Caco-2 (cell line): ENCODE measurements at regions of chr10 and their contacts with region 1.

Region 1: GRCh38 chr10:95430231-95430951 is 130.8 kb downstream of the SORBS1 start:
- DNase-seq: peak; percentile 69 to 76
- H3K4me3 ChIP-seq: no peak overlapping the region
- H3K4me3 Mint-ChIP-seq: no peak overlapping the region
- H3K27ac Mint-ChIP-seq: no peak overlapping the region
- H3K4me1 ChIP-seq: peaks cover 15% of the 10 kb centered on the region
- H3K4me1 Mint-ChIP-seq: no peaks in the 10 kb centered on the region
- H3K27me3 ChIP-seq: no peaks in the 10 kb centered on the region
- H3K27me3 Mint-ChIP-seq: no peaks in the 10 kb centered on the region
- CTCF ChIP-seq: peak; percentile 97 to 98

Region 2: GRCh38 chr10:95229724-95230627 is 200.4 kb before region 1 on chr10:
- CTCF ChIA-PET with region 1: no interaction called
- POLR2A ChIA-PET with region 1: no interaction called
- intact Hi-C with region 1: no loop called
- DNase-seq: no peak
- H3K4me3 ChIP-seq: no peak overlapping the region
- H3K4me3 Mint-ChIP-seq: no peak overlapping the region
- H3K27ac Mint-ChIP-seq: peak overlapping the region; percentile 24
- H3K4me1 ChIP-seq: peaks cover 5% of the 10 kb centered on the region
- H3K4me1 Mint-ChIP-seq: peaks cover 11% of the 10 kb centered on the region
- H3K27me3 ChIP-seq: no peaks in the 10 kb centered on the region
- H3K27me3 Mint-ChIP-seq: no peaks in the 10 kb centered on the region
- CTCF ChIP-seq: no peak

Region 3: GRCh38 chr10:95374597-95375209 is 55.7 kb before region 1 on chr10:
- CTCF ChIA-PET with region 1: interaction called, 6 read pairs
- POLR2A ChIA-PET with region 1: no interaction called
- intact Hi-C with region 1: loop called (anchors 1 kb)
- DNase-seq: peak; percentile 79 to 85
- H3K4me3 ChIP-seq: no peak overlapping the region
- H3K4me3 Mint-ChIP-seq: no peak overlapping the region
- H3K27ac Mint-ChIP-seq: no peak overlapping the region
- H3K4me1 ChIP-seq: no peaks in the 10 kb centered on the region
- H3K4me1 Mint-ChIP-seq: no peaks in the 10 kb centered on the region
- H3K27me3 ChIP-seq: no peaks in the 10 kb centered on the region
- H3K27me3 Mint-ChIP-seq: no peaks in the 10 kb centered on the region
- CTCF ChIP-seq: peak; percentile 94 to 95

Region 4: GRCh38 chr10:95467162-95467599 is 36.8 kb after region 1 on chr10:
- CTCF ChIA-PET with region 1: interaction called, 13 read pairs
- POLR2A ChIA-PET with region 1: no interaction called
- intact Hi-C with region 1: no loop called
- DNase-seq: peak; percentile 92 to 95
- H3K4me3 ChIP-seq: no peak overlapping the region
- H3K4me3 Mint-ChIP-seq: peak overlapping the region; percentile 18
- H3K27ac Mint-ChIP-seq: peak overlapping the region; percentile 46
- H3K4me1 ChIP-seq: peaks cover 46% of the 10 kb centered on the region
- H3K4me1 Mint-ChIP-seq: peaks cover 40% of the 10 kb centered on the region
- H3K27me3 ChIP-seq: no peaks in the 10 kb centered on the region
- H3K27me3 Mint-ChIP-seq: no peaks in the 10 kb centered on the region
- CTCF ChIP-seq: peak in 1 of 2 experiments; percentile 66

Region 5: GRCh38 chr10:95513941-95514392 is 83.6 kb after region 1 on chr10:
- CTCF ChIA-PET with region 1: no interaction called
- POLR2A ChIA-PET with region 1: no interaction called
- intact Hi-C with region 1: no loop called
- DNase-seq: no peak
- H3K4me3 ChIP-seq: no peak overlapping the region
- H3K4me3 Mint-ChIP-seq: no peak overlapping the region
- H3K27ac Mint-ChIP-seq: no peak overlapping the region
- H3K4me1 ChIP-seq: peaks cover 51% of the 10 kb centered on the region
- H3K4me1 Mint-ChIP-seq: peaks cover 44% of the 10 kb centered on the region
- H3K27me3 ChIP-seq: no peaks in the 10 kb centered on the region
- H3K27me3 Mint-ChIP-seq: no peaks in the 10 kb centered on the region
- CTCF ChIP-seq: no peak

Region 6: DNA sequence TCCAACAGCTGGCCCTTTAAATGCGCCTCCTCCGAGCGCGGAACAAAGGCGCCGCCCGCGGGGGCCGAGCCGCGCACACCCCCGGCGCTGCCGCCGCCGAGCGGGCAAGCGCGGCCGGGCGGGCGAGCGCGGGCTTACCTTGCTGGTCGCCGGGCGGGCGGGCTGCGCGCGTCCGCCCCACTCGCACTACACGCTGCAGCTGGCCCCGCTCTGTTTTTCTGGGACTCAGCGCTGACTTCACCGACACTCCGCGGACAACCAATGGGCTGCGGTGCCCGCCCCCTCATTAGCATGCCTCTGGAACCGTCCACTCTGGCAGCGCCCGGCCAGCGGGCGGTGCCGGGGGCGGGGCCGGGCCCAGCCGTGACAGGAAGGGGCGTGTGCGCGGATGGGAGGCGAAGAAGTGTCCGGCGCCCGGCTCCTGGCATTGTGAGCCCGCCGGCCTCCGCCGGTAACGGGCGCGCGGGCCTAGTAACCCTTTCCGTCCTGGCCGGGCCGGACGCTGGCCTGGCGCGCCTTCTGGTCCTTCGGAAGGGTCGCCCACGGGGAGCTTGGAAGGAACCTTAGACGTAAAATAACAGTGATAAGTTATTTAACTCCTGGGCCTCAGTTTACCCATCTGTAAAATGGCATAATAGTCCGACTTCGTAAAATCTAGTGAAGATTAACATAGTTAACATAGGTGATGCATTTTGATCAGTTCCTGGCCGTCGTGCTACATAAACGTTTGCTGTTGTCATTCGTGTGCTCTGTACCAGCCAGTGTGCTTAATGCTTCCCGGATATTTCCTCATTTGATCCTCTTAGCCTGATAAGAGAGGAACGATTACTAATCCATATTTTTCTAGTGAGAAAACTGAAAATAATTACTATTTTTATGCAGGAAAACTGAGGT is 131.0 kb after region 1 on chr10 and contains the start of gene SORBS1:
- CTCF ChIA-PET with region 1: interaction called, 10 read pairs
- POLR2A ChIA-PET with region 1: no interaction called
- intact Hi-C with region 1: loop called (anchors 2 kb)
- DNase-seq: peak; percentile 98
- H3K4me3 ChIP-seq: peak within 1 kb of the TSS; percentile 89
- H3K4me3 Mint-ChIP-seq: peak within 1 kb of the TSS; percentile 99
- H3K27ac Mint-ChIP-seq: peak within 1 kb of the TSS; percentile 83
- H3K4me1 ChIP-seq: peaks cover 50% of the 10 kb centered on the region
- H3K4me1 Mint-ChIP-seq: peaks cover 59% of the 10 kb centered on the region
- H3K27me3 ChIP-seq: no peaks in the 10 kb centered on the region
- H3K27me3 Mint-ChIP-seq: no peaks in the 10 kb centered on the region
- CTCF ChIP-seq: no peak
- total RNA-seq, gene SORBS1: 39.3 and 44.1 TPM in 2 replicates